Ascending aorta (tissue), 2 donors: ENCODE measurements at regions of chr20 and their contacts with region 1.

Region 1: GRCh38 chr20:6828794-6829423 is 61.4 kb downstream of the BMP2 start:
- DNase-seq: peak in 1 of 2 donors; percentile 66
- H3K4me3 ChIP-seq: no peak overlapping the region
- H3K27ac ChIP-seq: no peak overlapping the region
- H3K4me1 ChIP-seq: no peaks in the 10 kb centered on the region
- H3K27me3 ChIP-seq: no peaks in the 10 kb centered on the region
- CTCF ChIP-seq: peak; percentile 31 to 74 (median 51)

Region 2: GRCh38 chr20:6956574-6956973 is 127.7 kb after region 1 on chr20:
- intact Hi-C with region 1: no loop called
- DNase-seq: no peak
- H3K4me3 ChIP-seq: no peak overlapping the region
- H3K27ac ChIP-seq: no peak overlapping the region
- H3K4me1 ChIP-seq: no peaks in the 10 kb centered on the region
- H3K27me3 ChIP-seq: no peaks in the 10 kb centered on the region
- CTCF ChIP-seq: no peak

Region 3: GRCh38 chr20:7859356-7859802 is 1030.5 kb after region 1 on chr20:
- intact Hi-C with region 1: loop called (anchors 5 kb)
- DNase-seq: no peak
- H3K4me3 ChIP-seq: no peak overlapping the region
- H3K27ac ChIP-seq: no peak overlapping the region
- H3K4me1 ChIP-seq: no peaks in the 10 kb centered on the region
- H3K27me3 ChIP-seq: no peaks in the 10 kb centered on the region
- CTCF ChIP-seq: peak; percentile 36 to 74 (median 51)

Region 4: GRCh38 chr20:7935027-7935551 is 1106.2 kb after region 1 on chr20:
- intact Hi-C with region 1: loop called (anchors 5 kb)
- DNase-seq: no peak
- H3K4me3 ChIP-seq: no peak overlapping the region
- H3K27ac ChIP-seq: no peak overlapping the region
- H3K4me1 ChIP-seq: no peaks in the 10 kb centered on the region
- H3K27me3 ChIP-seq: no peaks in the 10 kb centered on the region
- CTCF ChIP-seq: no peak